Activated B cell treated with CpG ODN at 0.5 μM for 24 hours (primary cell): ENCODE measurements at regions of chrX and their contacts with region 1.

Region 1: DNA sequence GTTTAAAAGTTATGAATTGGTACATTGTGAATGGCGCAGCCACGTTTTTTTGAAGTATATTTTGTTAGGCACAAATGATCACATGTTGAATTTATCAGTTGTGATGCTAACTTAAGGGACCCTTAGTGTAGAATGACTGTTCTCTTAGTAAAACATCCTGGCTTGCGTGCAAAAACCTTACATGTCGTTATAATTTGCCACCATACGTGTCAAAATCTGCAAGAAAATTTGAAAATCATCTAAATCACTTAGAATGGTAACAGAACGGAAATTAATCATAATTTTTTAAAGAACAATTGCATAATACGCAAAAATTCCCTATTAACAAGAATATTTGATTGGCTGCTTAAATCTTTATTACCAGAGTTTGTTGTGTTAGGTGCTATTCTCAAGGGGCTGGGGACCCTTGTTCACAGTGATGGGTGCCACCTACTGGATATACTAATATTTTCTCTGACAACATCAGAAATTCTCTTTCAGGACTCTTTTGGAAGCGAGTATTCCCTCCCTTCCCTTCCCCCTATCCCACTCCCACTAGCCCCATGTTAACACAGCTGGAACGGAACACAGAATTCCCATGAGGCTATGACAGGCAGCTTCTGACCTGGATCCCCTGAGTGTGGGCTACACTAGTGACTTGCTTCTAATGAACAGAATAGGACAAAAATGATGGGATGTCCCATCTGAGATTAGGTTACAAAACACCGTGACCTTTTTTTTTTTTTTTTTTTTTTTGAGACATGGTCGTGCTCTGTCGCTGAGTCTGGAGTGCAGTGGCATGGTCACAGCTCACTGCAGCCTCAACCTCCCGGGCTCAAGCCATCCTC is 71.8 kb downstream of the SUPT20HL2 start:
- DNase-seq: no peak
- ATAC-seq: peak; percentile 34
- H3K4me3 Mint-ChIP-seq: no peak overlapping the region
- H3K27ac Mint-ChIP-seq: no peak overlapping the region
- H3K4me1 Mint-ChIP-seq: peaks cover 15% of the 10 kb centered on the region
- H3K27me3 Mint-ChIP-seq: no peaks in the 10 kb centered on the region
- CTCF ChIP-seq: no peak

Region 2: GRCh38 chrX:23694606-23695005 is 547.4 kb before region 1 on chrX:
- CTCF ChIA-PET with region 1: no interaction called
- POLR2A ChIA-PET with region 1: no interaction called
- intact Hi-C with region 1: loop called (anchors 10 kb)
- DNase-seq: no peak
- ATAC-seq: peak; percentile 78
- H3K4me3 Mint-ChIP-seq: no peak overlapping the region
- H3K27ac Mint-ChIP-seq: no peak overlapping the region
- H3K4me1 Mint-ChIP-seq: no peaks in the 10 kb centered on the region
- H3K27me3 Mint-ChIP-seq: no peaks in the 10 kb centered on the region
- CTCF ChIP-seq: no peak

Region 3: DNA sequence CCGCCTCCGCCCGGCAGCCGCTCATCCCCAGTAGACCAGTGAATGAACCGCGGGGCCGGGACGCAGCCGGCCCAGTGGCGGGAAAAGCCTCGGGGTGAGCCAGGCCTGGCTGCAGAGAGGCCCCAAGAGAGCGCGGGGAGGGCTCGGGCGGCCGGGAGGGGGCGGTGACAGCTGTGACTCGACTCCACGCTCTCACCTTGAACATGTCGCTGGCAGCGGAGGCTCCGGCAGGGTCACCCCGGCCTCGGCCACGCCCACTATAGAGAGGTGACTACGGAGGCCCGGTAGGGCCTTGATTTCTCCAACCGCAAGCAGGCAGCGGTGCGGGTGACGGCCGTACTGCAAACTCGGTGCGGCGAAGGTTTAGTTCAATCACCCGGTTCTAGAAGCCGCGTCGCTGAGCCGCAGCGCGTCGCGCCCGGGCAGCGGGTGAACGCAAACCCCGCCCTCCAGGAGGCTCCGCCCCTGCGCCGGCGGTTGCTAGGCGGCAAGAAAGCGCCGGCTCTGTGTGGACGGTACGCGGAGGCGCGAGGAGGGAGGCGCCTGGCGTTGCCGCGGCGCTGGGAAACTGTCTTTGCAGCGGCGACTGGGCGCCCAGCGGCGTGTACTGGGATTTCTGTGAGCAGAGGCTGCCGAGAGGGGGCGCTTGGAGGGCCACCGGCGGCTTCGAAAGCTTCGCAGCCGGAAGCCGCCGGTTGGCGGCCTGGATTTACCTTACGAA is 334.4 kb before region 1 on chrX and contains the starts of genes APOO and CXorf58:
- CTCF ChIA-PET with region 1: interaction called, 3 read pairs
- POLR2A ChIA-PET with region 1: no interaction called
- intact Hi-C with region 1: loop called (anchors 2 kb)
- DNase-seq: peak; percentile 85
- ATAC-seq: peak; percentile 90
- H3K4me3 Mint-ChIP-seq: peak within 1 kb of the TSS; percentile 82
- H3K27ac Mint-ChIP-seq: peak within 1 kb of the TSS; percentile 88
- H3K4me1 Mint-ChIP-seq: peaks cover 17% of the 10 kb centered on the region
- H3K27me3 Mint-ChIP-seq: no peaks in the 10 kb centered on the region
- CTCF ChIP-seq: peak; percentile 7
- total RNA-seq, gene APOO: 14.0 and 16.6 TPM in 2 replicates
- total RNA-seq, gene CXorf58: not detected in 2 replicates

Region 4: GRCh38 chrX:24081661-24082264 is 160.3 kb before region 1 on chrX:
- CTCF ChIA-PET with region 1: interaction called, 3 read pairs
- POLR2A ChIA-PET with region 1: no interaction called
- intact Hi-C with region 1: loop called (anchors 1 kb)
- DNase-seq: peak; percentile 14
- ATAC-seq: peak; percentile 65
- H3K4me3 Mint-ChIP-seq: no peak overlapping the region
- H3K27ac Mint-ChIP-seq: no peak overlapping the region
- H3K4me1 Mint-ChIP-seq: peaks cover 3% of the 10 kb centered on the region
- H3K27me3 Mint-ChIP-seq: no peaks in the 10 kb centered on the region
- CTCF ChIP-seq: no peak

Region 5: DNA sequence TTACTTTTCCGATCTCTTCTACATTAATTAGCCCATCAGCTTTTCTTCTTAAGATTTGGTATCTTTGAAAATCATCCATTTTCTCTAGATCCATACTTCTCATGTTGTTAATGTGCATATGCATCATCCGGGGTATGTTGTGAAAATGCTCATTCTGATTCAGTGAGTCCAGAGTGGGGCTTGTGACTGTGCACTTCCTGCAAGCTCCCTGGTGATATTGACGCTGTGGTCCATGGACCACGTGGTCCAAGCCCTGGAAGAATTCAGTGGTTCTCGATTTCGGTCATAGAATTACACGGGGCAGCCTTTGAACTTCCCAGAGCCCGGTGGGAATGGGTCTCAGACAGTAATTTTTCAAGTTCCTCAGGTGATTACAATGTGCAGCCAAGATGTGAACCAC is 22.7 kb before region 1 on chrX:
- CTCF ChIA-PET with region 1: no interaction called
- POLR2A ChIA-PET with region 1: no interaction called
- intact Hi-C with region 1: no loop called
- DNase-seq: no peak
- ATAC-seq: no peak
- H3K4me3 Mint-ChIP-seq: no peak overlapping the region
- H3K27ac Mint-ChIP-seq: no peak overlapping the region
- H3K4me1 Mint-ChIP-seq: peaks cover 10% of the 10 kb centered on the region
- H3K27me3 Mint-ChIP-seq: no peaks in the 10 kb centered on the region
- CTCF ChIP-seq: no peak